ENCODE measurements at regions of chrX and their contacts with region 1.

Region 1: GRCh38 chrX:30652527-30653414 is 452 bp upstream of the GK start:
- H3K4me3 Mint-ChIP-seq: peak overlapping the region; percentile 87
- H3K27ac Mint-ChIP-seq: peak overlapping the region; percentile 96
- H3K4me1 Mint-ChIP-seq: peaks cover 14% of the 10 kb centered on the region
- H3K27me3 Mint-ChIP-seq: no peaks in the 10 kb centered on the region

Region 2: DNA sequence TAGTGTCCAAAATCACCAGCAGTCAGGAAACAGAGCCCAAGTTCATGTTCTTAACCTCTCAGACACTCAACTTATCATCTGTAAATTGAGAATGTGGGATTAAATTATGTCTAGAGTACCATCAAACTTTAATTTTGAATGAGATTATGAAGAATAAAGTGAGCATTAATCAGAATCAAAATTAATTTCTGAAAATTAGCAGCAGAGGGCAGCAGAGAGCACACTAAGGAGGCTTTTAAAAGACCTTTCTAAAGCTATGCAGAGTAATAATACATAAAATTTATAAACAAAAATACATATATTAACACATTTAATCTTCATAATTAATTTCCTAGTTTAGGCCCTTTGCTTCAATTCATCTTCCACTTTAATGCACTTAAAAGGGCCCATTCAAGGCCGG is 82.3 kb before region 1 on chrX:
- intact Hi-C with region 1: loop called (anchors 10 kb)
- H3K4me3 Mint-ChIP-seq: peak overlapping the region; percentile 82
- H3K27ac Mint-ChIP-seq: peak overlapping the region; percentile 81
- H3K4me1 Mint-ChIP-seq: peaks cover 40% of the 10 kb centered on the region
- H3K27me3 Mint-ChIP-seq: no peaks in the 10 kb centered on the region

Region 3: GRCh38 chrX:31136144-31136611 is 483.4 kb after region 1 on chrX:
- intact Hi-C with region 1: no loop called
- H3K4me3 Mint-ChIP-seq: no peak overlapping the region
- H3K27ac Mint-ChIP-seq: no peak overlapping the region
- H3K4me1 Mint-ChIP-seq: peaks cover 15% of the 10 kb centered on the region
- H3K27me3 Mint-ChIP-seq: no peaks in the 10 kb centered on the region